PC-3 (cell line): ENCODE measurements at regions of chr5 and their contacts with region 1.

Region 1: GRCh38 chr5:76337953-76338451 is 65.1 kb upstream of the IQGAP2 start:
- DNase-seq: peak; percentile 76
- ATAC-seq: peak; percentile 78
- H3K4me3 ChIP-seq: no peak overlapping the region
- H3K27ac ChIP-seq: no peak overlapping the region
- H3K4me1 ChIP-seq: no peaks in the 10 kb centered on the region
- H3K27me3 ChIP-seq: peaks cover 14% of the 10 kb centered on the region
- CTCF ChIP-seq: peak; percentile 60

Region 2: GRCh38 chr5:76199336-76200318 is 138.4 kb before region 1 on chr5:
- CTCF ChIA-PET with region 1: no interaction called
- POLR2A ChIA-PET with region 1: no interaction called
- intact Hi-C with region 1: no loop called
- DNase-seq: no peak
- ATAC-seq: no peak
- H3K4me3 ChIP-seq: no peak overlapping the region
- H3K27ac ChIP-seq: no peak overlapping the region
- H3K4me1 ChIP-seq: no peaks in the 10 kb centered on the region
- H3K27me3 ChIP-seq: peaks cover 28% of the 10 kb centered on the region
- CTCF ChIP-seq: no peak

Region 3: DNA sequence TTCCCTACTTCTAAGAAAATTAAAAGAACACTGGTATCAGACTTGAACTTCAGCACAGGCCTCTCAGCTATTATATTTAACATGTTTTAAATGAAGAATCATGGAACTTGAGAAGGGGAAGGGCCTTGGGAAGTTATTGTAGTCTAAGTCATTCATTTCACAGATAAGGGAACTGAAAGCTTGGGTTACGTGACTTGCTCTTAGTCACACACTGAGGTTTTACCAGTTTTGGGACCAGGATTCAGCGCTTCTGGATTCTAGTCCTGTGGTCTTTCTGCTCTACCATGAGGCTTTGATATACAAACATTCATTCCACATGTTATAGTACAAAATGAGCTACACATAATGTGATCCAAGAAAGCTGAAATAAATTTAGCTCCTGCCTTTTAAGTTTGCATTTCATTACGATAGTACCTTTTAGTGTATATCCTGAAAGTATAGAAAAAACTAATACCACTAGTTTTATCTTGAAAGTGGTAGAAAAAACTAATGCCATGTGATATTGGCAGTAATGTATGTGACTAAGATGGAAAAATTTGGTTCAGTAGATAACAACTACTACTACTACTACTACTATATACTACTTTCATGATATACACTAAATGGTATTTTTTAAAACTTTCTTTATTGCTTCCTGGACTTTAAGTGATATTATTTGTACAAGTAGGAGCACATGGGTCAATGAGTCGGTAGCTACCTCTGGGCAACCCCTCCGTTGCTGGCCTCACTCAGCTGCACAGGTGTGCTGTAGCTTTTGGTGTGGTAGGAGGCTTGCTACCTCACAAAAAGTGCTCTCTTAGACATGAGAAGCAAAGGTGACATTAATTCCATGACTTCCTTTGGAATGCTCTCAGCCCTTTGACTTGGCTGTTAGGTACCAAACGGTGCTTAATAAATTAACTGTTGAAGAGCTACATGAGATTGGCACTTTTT is 244.5 kb after region 1 on chr5:
- CTCF ChIA-PET with region 1: no interaction called
- POLR2A ChIA-PET with region 1: no interaction called
- intact Hi-C with region 1: loop called (anchors 1 kb)
- DNase-seq: peak; percentile 61
- ATAC-seq: peak; percentile 38; the same call in 1 of the 2 replicates
- H3K4me3 ChIP-seq: no peak overlapping the region
- H3K27ac ChIP-seq: no peak overlapping the region
- H3K4me1 ChIP-seq: peaks cover 11% of the 10 kb centered on the region; the same call in 1 of the 2 replicates
- H3K27me3 ChIP-seq: 0 out of 2 replicates have a peak, but pooled peaks cover 5% of the 10 kb centered on the region
- CTCF ChIP-seq: no peak